ENCODE measurements at regions of chr20 and their contacts with region 1.

Region 1: DNA sequence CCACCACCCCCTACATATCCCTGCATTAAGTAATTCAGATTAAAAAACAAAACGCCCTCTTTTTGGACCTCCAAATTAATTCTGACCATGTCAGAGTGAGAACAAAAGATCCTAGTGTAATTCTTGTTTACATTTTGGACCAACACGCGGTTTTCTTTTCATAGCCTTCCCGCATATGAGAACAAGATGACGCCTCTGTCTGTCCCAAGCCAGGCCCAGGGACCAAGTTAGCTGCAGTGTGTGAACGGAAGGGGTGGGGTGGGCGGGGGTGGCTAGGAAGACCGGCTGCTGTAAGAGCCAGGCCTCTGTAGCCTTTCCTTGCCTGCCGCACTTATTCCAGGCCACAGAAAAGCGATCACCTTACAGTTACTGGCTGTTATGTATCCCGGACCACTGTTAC is 68.0 kb downstream of the PLCG1 start:
- DNase-seq: peak in 8 of 10 donors; percentile 68 to 83 (median 72)
- H3K4me3 ChIP-seq: no peak overlapping the region
- H3K27ac ChIP-seq: peak overlapping the region; percentile 79 to 100 (median 99)
- H3K27me3 ChIP-seq: no peaks in the 10 kb centered on the region
- CTCF ChIP-seq: peak in 1 of 56 donors; percentile 18

Region 2: GRCh38 chr20:41222296-41222695 is 17.0 kb after region 1 on chr20:
- intact Hi-C with region 1: loop called in 1 of 2 experiments (anchors 1 kb)
- DNase-seq: peak in 1 of 10 donors; percentile 70
- H3K4me3 ChIP-seq: peak overlapping the region in 9 of 59 donors; percentile 4 to 35 (median 12)
- H3K27ac ChIP-seq: peak overlapping the region; percentile 72 to 100 (median 97)
- H3K27me3 ChIP-seq: no peaks in the 10 kb centered on the region
- CTCF ChIP-seq: no peak

Region 3: DNA sequence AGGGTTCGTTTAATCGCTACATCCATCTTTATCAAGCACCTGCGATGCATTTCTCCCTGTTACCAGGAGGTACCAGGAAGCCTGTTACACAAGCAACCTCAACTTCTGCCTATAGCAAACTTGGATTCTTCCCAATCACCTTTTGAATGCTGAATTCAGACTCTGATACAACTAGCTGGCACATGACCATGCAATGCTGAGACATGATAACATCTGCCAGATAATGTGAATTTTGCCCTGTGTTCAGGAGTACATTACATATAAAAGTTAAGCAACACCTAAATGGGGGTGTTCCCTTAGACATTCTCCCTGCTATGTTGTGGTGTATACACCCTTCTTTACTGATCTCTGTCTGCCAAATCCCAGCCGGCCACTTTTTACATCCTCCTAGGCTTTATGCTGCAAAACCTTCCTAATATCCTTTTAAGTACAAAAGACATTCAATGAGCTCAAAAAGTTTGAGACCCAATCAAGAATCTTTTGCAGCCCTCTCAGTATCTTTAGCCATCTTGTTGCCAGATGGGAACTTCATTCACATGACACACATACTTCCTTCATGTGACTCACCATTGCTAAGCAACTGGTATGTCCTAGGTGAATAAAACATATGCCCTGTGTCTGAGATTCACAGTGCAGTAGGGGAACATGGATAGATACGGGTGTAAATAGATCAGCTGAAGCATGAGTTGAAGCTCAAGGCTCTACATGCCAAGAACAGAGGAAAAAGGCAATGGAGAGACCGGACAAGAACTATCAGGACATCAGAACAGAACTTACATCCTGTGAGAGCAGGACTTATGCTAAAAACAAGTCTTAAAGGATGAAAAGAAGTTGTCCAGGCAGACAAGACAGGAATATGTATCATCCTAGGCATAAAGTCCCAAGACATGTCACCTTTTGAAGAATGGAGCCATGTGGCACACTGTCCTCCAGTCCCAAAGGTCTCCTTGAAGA is 27.9 kb after region 1 on chr20:
- intact Hi-C with region 1: loop called in 1 of 2 experiments (anchors 2 kb)
- DNase-seq: no peak
- H3K4me3 ChIP-seq: peak overlapping the region in 8 of 59 donors; percentile 5 to 39 (median 17)
- H3K27ac ChIP-seq: peak overlapping the region; percentile 73 to 97 (median 94)
- H3K27me3 ChIP-seq: no peaks in the 10 kb centered on the region
- CTCF ChIP-seq: no peak

Measured in dorsolateral prefrontal cortex (tissue), 120 donors.